ENCODE measurements at regions of chr2 and their contacts with region 1.

Region 1: GRCh38 chr2:27703638-27704341 is 40.1 kb downstream of the SLC4A1AP start:
- DNase-seq: peak; percentile 92
- ATAC-seq: peak; percentile 57

Region 2: DNA sequence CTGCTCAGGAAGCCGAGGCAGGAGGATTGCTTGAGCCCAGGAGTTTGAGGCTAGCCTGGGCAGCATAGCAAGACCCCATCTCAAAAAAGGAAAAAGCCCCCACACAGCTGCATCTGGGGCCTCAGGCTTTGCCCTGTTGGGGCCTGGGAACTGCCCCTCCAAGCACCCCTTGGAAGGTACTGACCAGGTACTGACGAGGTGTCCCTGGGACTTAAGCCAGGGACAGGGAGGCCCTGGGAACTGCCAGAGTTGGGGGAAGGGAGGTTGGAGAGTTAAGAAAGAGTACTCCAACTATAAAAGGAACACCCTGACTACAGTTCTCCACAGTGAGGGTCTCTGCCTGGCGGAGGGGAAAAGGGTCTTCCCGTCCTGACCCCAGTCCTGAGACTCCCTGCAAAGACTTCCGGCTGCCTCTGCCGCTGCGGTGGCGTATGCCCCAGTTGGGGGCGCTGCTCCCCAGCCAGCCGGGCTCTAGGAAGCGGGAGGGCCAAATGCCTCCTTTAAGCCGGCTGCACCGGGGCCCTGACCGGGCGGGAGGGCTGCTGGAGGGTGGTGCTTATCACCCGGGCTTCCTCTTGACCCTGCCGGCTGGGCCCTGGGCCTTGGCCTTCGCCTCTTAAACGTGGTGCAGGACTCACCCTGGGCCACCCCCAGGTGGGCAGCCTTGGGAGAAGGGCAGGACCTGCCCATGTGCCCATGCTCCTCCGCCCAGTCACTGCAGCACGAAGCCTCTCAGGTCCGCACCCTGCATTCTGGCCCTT is 453.7 kb before region 1 on chr2:
- intact Hi-C with region 1: no loop called
- DNase-seq: no peak
- ATAC-seq: peak; percentile 34

Region 3: GRCh38 chr2:27428978-27429541 is 274.7 kb before region 1 on chr2:
- intact Hi-C with region 1: no loop called
- DNase-seq: peak; percentile 83
- ATAC-seq: peak; percentile 84

Region 4: GRCh38 chr2:28392297-28393113 is 688.7 kb after region 1 on chr2 and contains the start of gene FOSL2:
- intact Hi-C with region 1: loop called (anchors 10 kb)
- DNase-seq: peak; percentile 96
- ATAC-seq: peak; percentile 72
- total RNA-seq, gene FOSL2: 230 TPM

Region 5: DNA sequence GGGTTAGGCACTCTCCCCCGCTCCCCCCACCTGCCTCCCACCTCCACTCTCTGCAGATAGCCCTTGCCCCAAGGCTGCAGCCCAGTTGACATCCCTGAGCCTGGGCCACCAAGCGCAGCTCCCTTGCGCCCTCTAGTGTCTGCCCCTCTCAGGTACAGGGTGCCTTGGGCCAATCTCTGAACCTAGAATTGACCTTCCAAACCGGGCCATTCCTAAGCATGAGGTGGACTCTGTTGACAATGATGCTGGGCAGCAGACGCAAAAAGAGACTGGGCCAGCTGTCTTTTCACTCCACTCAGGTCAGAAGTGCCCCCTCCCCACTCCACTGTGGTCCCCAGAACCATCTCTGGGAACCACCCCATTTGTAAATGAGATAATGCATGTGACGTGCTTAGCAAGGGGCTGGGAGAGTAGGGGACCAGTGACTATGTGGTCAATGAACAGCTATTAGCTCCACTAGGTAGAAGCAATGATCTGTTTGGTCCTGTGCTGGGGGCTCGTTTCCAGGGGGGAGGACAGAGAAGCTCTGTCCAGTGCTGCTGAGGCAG is 748.8 kb after region 1 on chr2:
- intact Hi-C with region 1: loop called (anchors 5 kb)
- DNase-seq: peak; percentile 90
- ATAC-seq: peak; percentile 87

Region 6: DNA sequence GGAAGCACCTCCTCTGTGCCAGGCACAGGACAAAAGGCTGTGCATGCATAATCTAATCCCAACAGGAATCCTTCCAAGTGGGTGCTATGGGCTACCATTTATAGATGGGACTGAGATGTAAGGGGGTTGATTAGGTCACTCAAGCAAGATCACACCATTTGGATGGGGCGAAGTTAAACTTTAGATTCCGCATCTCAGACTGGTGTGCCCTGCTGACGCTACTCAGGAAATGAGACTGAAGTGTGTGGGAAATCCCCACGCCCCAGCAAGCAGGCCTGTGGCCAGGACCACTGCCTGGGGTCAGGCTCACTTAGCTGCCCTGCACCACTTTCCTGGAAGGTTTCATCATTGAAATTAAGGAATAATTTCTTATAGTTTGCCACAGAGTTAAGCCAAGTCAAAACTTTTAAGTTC is 977.4 kb after region 1 on chr2:
- intact Hi-C with region 1: no loop called
- DNase-seq: no peak
- ATAC-seq: no peak

Measured in sciatic nerve (tissue), 2 donors.